Vagina (tissue), 2 donors: ENCODE measurements at regions of chr7 and their contacts with region 1.

Region 1: GRCh38 chr7:107939573-107940489 is 48.8 kb downstream of the DLD start:
- DNase-seq: no peak
- H3K4me3 ChIP-seq: no peak overlapping the region
- H3K27ac ChIP-seq: peak overlapping the region; percentile 65
- H3K4me1 ChIP-seq: peaks cover 37% of the 10 kb centered on the region
- H3K27me3 ChIP-seq: no peaks in the 10 kb centered on the region
- CTCF ChIP-seq: no peak
- POLR2A ChIP-seq: no peak

Region 2: GRCh38 chr7:107902381-107902780 is 37.5 kb before region 1 on chr7:
- intact Hi-C with region 1: no loop called
- DNase-seq: no peak
- H3K4me3 ChIP-seq: no peak overlapping the region
- H3K27ac ChIP-seq: no peak overlapping the region
- H3K4me1 ChIP-seq: peaks cover 10% of the 10 kb centered on the region
- H3K27me3 ChIP-seq: no peaks in the 10 kb centered on the region
- CTCF ChIP-seq: no peak
- POLR2A ChIP-seq: no peak

Region 3: GRCh38 chr7:108002726-108003598 is 63.1 kb after region 1 on chr7 and contains the start of gene LAMB1:
- intact Hi-C with region 1: loop called (anchors 10 kb)
- DNase-seq: peak in 1 of 2 donors; percentile 89
- H3K4me3 ChIP-seq: peak within 1 kb of the TSS; percentile 66 to 72
- H3K27ac ChIP-seq: peak within 1 kb of the TSS; percentile 65
- H3K4me1 ChIP-seq: peaks cover 28% of the 10 kb centered on the region
- H3K27me3 ChIP-seq: no peaks in the 10 kb centered on the region
- CTCF ChIP-seq: no peak
- POLR2A ChIP-seq: peak in 1 of 2 donors; percentile 26
- total RNA-seq, gene LAMB1: 152 TPM

Region 4: DNA sequence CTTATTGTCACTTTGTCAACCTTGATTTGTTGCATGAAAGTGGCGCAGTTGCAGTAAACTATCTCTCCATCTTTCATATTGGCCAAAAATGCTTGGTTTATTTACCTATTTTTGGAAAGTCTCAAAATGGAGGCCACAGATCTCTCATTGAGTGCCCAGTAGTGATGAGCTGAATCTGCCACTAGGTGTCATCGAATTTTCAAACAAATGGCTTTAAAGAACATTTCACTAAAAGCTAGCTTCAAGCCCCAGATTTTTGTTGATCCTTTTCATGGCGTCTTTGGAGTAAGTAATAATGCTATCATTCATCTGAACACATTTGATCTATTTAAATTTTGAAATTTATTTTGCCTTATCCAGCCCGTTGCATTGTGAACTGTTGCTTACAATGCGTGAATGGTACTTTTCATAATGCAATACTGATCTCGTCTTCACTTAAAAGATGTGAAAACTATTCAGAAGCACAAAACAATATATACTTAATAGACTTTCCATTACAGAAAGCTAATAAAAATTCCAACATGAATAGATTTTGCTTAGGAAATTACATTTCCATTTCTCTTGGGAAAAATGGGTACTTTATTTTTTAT is 866.1 kb after region 1 on chr7:
- intact Hi-C with region 1: no loop called
- DNase-seq: no peak
- H3K4me3 ChIP-seq: no peak overlapping the region
- H3K27ac ChIP-seq: no peak overlapping the region
- H3K4me1 ChIP-seq: no peaks in the 10 kb centered on the region
- H3K27me3 ChIP-seq: no peaks in the 10 kb centered on the region
- CTCF ChIP-seq: no peak
- POLR2A ChIP-seq: no peak